Posterior cingulate gyrus (tissue), 11 donors: ENCODE measurements at regions of chr2 and their contacts with region 1.

Region 1: GRCh38 chr2:227033471-227034148 is 130.4 kb downstream of the COL4A4 start:
- DNase-seq: no peak

Region 2: DNA sequence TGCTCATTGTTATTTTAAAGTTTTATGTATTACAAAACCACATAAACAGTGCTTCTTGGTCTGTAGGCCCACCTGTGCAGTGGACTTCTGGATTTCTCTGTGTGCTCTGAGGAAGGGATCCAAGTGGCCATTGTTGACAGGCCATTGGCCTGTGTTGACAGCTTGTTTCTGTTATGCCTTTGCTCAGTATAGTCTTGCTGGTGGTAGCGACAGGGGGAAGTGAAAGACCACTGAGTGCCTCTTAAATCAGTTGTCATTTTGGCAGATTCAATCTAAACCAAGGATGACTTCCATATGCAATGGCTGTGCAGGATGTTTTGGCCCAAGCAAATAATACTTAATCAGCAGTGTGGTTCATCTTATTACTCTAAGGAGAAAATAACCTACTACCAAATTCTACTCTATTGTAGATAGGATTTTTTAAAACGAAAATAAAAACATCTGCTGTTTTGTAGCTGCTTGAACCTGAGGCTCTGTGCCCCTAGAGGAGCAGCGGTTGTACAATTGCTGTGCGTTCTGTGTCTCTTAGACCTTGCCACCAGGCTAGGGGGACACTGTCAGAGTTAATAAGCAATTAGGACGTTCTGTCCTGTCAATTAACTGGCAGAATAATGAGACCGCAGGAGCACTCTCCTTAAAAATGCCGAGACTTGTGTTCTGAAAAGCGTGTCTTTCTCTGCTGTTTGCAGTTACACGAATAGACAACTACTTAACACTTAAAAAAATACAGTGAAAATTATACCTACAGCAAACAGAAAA is 89.6 kb before region 1 on chr2:
- intact Hi-C with region 1: no loop called
- DNase-seq: no peak

Region 3: GRCh38 chr2:227010433-227010832 is 23.2 kb before region 1 on chr2:
- intact Hi-C with region 1: loop called (anchors 2 kb)
- DNase-seq: no peak

Region 4: GRCh38 chr2:227082286-227082685 is 48.7 kb after region 1 on chr2:
- intact Hi-C with region 1: no loop called
- DNase-seq: no peak